Left lung (tissue), 14 donors: ENCODE measurements at regions of chr17 and their contacts with region 1.

Region 1: GRCh38 chr17:48131216-48131824 is 23.8 kb downstream of the SNX11 start:
- DNase-seq: peak in 2 of 4 donors; percentile 63 to 80
- ATAC-seq: peak; percentile 93
- H3K4me3 ChIP-seq: no peak overlapping the region
- H3K27ac ChIP-seq: no peak overlapping the region
- H3K4me1 ChIP-seq: no peaks in the 10 kb centered on the region
- H3K27me3 ChIP-seq: no peaks in the 10 kb centered on the region
- CTCF ChIP-seq: peak; percentile 82 to 87

Region 2: GRCh38 chr17:48024937-48025906 is 106.1 kb before region 1 on chr17:
- intact Hi-C with region 1: loop called (anchors 10 kb)
- DNase-seq: peak; percentile 94 to 100 (median 98)
- ATAC-seq: peak; percentile 89
- H3K4me3 ChIP-seq: peak overlapping the region; percentile 31 to 41
- H3K27ac ChIP-seq: peak overlapping the region; percentile 60 to 87
- H3K4me1 ChIP-seq: peaks cover 14 to 55% of the 10 kb centered on the region in 2 donors
- H3K27me3 ChIP-seq: peaks cover 0 to 36% of the 10 kb centered on the region in 2 donors
- CTCF ChIP-seq: peak; percentile 54 to 86

Region 3: DNA sequence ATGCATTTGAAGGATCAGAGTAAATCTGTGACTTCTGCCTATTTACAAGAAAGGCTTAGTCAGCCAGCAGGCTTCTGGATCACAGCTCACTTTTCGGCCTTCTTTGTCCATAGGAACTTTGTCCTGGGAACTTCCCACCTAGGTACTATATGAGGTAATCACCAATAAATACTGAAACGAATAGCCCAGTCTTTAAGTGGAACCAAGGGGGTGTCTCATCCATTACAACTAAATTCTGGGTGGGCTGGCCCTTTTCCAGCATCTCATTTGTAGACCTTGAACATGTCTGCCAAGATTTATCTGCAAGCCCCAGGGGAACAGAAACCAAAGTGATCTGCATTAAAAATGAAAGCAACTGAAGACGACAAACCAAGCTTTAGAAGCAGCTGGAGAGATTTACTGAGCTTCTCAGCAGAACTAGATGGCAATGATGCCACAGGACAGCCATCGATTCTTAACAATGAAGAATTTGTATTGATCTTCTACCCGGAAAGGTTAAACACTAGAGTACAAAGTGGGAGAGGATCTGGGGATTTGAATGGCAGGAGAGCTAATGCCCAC is 31.7 kb after region 1 on chr17:
- intact Hi-C with region 1: no loop called
- DNase-seq: no peak
- ATAC-seq: no peak
- H3K4me3 ChIP-seq: no peak overlapping the region
- H3K27ac ChIP-seq: no peak overlapping the region
- H3K4me1 ChIP-seq: no peaks in the 10 kb centered on the region
- H3K27me3 ChIP-seq: no peaks in the 10 kb centered on the region
- CTCF ChIP-seq: no peak